Ovary (tissue), 10 donors: ENCODE measurements at regions of chr22 and their contacts with region 1.

Region 1: GRCh38 chr22:35961480-35962295 is 66.9 kb downstream of the RBFOX2 start:
- DNase-seq: peak in 4 of 5 donors; percentile 31 to 63 (median 40)
- H3K4me3 ChIP-seq: no peak overlapping the region
- H3K27ac ChIP-seq: no peak overlapping the region
- H3K4me1 ChIP-seq: peaks cover 8% of the 10 kb centered on the region
- H3K27me3 ChIP-seq: no peaks in the 10 kb centered on the region
- CTCF ChIP-seq: no peak
- EP300 ChIP-seq: no peak
- POLR2A ChIP-seq: no peak

Region 2: DNA sequence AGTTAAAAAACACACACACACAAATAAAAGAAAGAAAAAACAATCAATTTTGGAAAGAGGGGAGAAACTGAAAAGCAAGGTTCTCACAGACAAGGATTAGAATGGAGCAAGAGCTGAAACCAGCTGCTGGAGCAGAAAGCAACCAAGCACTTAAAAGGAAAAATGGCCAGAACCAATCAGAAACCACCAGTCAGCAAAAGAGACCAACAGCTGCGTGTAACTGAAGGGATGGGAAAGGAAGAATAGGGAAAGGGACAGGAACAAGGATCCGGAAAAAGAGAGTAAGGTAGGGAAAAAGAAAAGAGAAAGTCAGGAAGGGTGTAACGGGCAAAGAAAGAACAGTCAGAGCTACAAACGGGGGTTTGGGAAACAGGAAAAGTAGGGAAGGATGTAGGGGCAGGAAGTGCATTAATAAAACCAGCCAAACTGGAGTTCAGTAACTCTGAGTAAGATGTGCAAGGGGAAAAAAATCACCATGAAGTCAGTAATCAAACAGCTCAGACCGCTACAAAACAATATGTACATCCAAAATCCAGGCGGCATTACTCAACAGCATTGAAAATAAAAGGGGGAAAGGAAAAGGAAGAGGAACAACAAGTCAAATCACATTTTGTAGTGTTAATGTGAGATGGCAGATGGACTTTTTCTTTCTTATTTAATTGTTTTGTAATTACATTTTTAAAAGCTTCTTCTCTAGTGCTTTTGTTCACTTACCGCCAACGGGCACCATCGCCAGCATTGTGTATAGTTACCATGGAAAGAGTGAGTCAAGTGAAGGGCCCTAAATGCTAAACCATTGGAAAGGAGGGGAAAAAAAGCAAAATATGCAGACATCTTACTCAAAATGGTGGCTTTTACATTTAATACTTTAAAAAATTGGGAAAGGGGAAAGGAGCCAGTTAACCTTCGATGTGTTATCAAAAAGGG is 194.8 kb before region 1 on chr22:
- intact Hi-C with region 1: no loop called
- DNase-seq: peak in 1 of 5 donors; percentile 36
- H3K4me3 ChIP-seq: no peak overlapping the region
- H3K27ac ChIP-seq: no peak overlapping the region
- H3K4me1 ChIP-seq: no peaks in the 10 kb centered on the region
- H3K27me3 ChIP-seq: no peaks in the 10 kb centered on the region
- CTCF ChIP-seq: no peak
- EP300 ChIP-seq: no peak
- POLR2A ChIP-seq: no peak

Region 3: DNA sequence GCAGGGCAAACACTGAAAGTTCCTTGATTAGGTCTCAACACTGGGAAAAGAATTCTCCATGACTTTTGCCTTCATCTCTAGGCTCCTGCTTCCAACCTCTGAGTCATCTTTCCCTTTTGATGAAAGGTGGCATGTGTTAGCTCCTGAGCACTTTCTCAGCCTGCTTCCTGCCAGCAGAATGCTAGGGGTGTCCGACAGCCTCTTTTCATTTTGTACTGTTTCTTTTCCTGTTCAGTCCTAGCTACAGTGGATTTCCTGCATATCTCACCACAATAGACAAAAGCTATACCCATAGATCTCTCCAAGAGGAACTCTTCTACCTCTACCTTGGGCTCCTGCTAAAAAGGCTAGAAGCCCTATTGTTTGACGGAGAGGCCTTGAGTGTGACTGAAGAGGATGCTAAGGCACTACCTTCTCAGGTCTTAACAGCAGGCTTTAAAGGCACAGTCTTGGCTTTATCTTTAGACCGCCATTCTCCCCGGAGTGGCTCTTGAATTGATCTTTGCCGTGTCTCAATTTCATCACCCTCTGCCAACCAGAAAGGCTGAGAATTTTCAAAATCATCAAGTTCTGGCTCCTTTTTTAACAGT is 78.6 kb before region 1 on chr22:
- intact Hi-C with region 1: loop called in 1 of 4 experiments (anchors 5 kb)
- DNase-seq: no peak
- H3K4me3 ChIP-seq: no peak overlapping the region
- H3K27ac ChIP-seq: no peak overlapping the region
- H3K4me1 ChIP-seq: peaks cover 18% of the 10 kb centered on the region
- H3K27me3 ChIP-seq: no peaks in the 10 kb centered on the region
- CTCF ChIP-seq: no peak
- EP300 ChIP-seq: no peak
- POLR2A ChIP-seq: no peak

Region 4: DNA sequence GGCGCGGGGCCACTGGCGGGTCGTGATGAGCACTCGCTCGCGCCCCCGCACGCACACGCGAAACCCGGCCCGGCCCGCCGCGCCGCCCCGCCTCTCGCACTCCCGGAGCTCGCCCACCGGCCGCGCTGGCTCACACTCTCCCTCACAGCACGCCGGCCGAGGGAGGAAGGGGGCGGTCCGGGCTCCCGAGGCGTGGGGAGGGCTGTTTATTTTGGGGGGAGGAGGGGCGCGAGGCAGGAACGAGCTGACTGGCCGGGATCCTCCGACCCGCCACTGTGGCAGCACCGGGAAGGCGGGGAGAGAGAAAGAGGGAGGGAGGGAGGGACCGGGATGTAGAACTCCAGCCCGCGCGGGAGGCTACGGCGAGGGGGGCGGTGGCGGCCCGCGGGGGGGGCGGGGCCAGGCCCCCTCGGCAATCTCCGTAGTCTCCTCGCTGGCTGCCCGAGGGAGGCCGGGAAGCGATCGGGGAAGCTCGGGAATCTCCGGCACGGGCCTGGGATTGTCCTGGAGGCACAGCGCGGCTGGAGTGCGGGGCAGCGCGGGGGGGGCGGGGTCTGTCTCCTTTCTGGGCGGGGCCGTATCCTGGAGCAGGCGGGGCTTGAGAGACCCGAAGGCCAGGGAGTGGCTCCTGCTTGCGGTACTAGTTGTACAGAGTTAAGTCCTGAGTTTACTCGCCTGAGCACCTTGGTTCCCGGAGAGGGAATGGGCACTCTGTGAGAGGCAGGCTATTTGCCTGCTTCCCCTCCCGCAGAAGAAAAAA is 67.1 kb after region 1 on chr22 and contains the start of gene RBFOX2:
- intact Hi-C with region 1: loop called in 1 of 4 experiments (anchors 10 kb)
- DNase-seq: peak; percentile 98 to 99 (median 99)
- H3K4me3 ChIP-seq: peak within 1 kb of the TSS; percentile 66
- H3K27ac ChIP-seq: peak within 1 kb of the TSS; percentile 84 to 93
- H3K4me1 ChIP-seq: peaks cover 8% of the 10 kb centered on the region
- H3K27me3 ChIP-seq: no peaks in the 10 kb centered on the region
- CTCF ChIP-seq: no peak
- EP300 ChIP-seq: no peak
- POLR2A ChIP-seq: peak; percentile 54
- total RNA-seq, gene RBFOX2: 71.1 to 137 (median 128) TPM